PC-9 (cell line): ENCODE measurements at regions of chr2 and their contacts with region 1.

Region 1: GRCh38 chr2:60780721-60781120 is 24.7 kb downstream of the PAPOLG start:
- DNase-seq: no peak
- H3K4me3 ChIP-seq: no peak overlapping the region
- H3K27ac ChIP-seq: no peak overlapping the region
- H3K4me1 ChIP-seq: no peaks in the 10 kb centered on the region
- H3K27me3 ChIP-seq: no peaks in the 10 kb centered on the region
- CTCF ChIP-seq: no peak

Region 2: DNA sequence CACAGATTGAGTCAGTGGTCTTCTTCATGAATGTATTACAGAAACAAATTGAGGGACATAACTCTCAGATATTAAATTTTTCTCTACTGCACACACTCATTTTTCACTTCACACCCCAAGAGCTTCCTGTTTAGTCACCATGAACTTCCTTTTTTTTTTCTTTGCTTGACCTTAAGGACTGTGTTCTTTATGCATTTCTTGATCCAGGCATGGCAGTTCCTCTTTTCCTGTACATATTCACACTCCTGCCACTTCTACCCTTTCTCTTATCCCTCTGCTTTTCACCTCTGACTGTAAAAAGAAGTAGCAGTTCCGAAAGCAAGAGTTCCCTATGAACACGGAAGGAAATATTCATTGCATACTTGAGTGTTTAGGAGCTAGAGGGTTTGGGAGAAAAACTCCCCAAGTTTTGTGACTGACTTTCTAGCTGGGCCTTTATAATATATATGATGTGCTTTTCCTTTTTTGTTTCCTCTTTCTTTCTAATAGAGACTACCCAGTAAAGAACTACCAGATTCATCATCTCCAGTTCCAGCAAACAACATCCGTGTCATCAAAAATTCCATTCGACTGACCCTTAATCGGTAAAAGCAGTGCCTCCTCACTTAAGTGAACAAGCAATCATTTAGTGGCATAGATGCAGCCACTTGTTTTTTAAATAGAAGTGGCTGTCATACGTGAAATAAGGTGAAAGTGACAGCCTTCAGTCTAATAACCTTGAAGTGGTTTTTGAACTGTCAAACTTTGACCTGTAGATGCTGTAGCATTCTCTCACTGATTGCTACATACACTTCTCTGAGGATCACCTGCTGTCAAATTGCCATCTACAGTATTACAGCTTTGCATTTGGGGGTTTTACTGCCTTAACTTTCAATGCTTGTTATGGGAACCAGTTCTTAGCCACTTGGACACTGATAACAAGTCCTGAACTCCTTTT is 16.1 kb after region 1 on chr2:
- CTCF ChIA-PET with region 1: no interaction called
- POLR2A ChIA-PET with region 1: no interaction called
- intact Hi-C with region 1: no loop called
- DNase-seq: no peak
- H3K4me3 ChIP-seq: no peak overlapping the region
- H3K27ac ChIP-seq: no peak overlapping the region
- H3K4me1 ChIP-seq: no peaks in the 10 kb centered on the region
- H3K27me3 ChIP-seq: no peaks in the 10 kb centered on the region
- CTCF ChIP-seq: no peak

Region 3: DNA sequence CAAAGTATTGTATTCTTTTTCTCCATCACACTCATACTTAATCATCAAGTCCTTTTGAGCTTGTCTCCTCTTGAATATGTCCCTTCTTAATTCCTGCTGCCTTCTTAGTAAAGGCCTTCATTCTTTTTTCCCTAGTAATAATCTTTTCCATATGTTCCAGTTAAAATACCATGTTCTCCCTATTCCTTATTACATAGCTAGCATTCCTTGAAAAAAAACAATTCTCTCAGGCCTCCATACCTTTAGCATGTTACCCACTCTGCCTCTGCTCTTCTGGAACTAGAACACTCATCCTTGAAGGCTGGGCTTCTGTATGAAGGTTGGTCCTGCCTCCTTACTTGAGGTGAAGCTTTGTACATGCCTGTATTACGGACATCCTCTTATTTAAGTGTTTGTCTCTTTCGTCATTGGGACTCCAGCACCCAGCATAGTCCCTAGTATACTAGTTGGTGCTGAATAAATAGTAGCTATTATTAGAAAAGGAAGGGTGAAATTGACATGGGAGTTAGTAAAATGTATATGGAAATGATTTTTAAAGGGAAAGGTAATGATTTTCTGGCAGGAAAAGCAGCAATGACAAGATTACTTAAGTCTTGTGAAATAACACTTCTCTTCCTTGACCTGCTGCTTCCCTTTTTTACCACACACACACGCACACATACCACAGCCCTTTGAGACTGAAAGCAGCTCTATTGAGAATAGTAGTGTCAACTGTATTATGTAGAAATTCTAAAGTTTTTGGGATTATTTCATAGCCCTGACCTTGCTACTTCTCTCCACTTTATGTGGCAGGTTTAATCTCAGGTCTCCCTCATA is 146.2 kb after region 1 on chr2:
- CTCF ChIA-PET with region 1: no interaction called
- POLR2A ChIA-PET with region 1: no interaction called
- intact Hi-C with region 1: no loop called
- DNase-seq: no peak
- H3K4me3 ChIP-seq: no peak overlapping the region
- H3K27ac ChIP-seq: no peak overlapping the region
- H3K4me1 ChIP-seq: no peaks in the 10 kb centered on the region
- H3K27me3 ChIP-seq: no peaks in the 10 kb centered on the region
- CTCF ChIP-seq: no peak

Region 4: GRCh38 chr2:60977562-60977895 is 196.8 kb after region 1 on chr2:
- CTCF ChIA-PET with region 1: interaction called, 11 read pairs
- POLR2A ChIA-PET with region 1: no interaction called
- intact Hi-C with region 1: no loop called
- DNase-seq: no peak
- H3K4me3 ChIP-seq: no peak overlapping the region
- H3K27ac ChIP-seq: no peak overlapping the region
- H3K4me1 ChIP-seq: no peaks in the 10 kb centered on the region
- H3K27me3 ChIP-seq: no peaks in the 10 kb centered on the region
- CTCF ChIP-seq: no peak

Region 5: GRCh38 chr2:61044636-61045035 is 263.9 kb after region 1 on chr2:
- CTCF ChIA-PET with region 1: no interaction called
- POLR2A ChIA-PET with region 1: interaction called, 10 read pairs
- intact Hi-C with region 1: no loop called
- DNase-seq: no peak
- H3K4me3 ChIP-seq: no peak overlapping the region
- H3K27ac ChIP-seq: no peak overlapping the region
- H3K4me1 ChIP-seq: no peaks in the 10 kb centered on the region
- H3K27me3 ChIP-seq: no peaks in the 10 kb centered on the region
- CTCF ChIP-seq: no peak

Region 6: GRCh38 chr2:61470965-61471904 is 690.5 kb after region 1 on chr2 and contains the start of gene USP34:
- CTCF ChIA-PET with region 1: no interaction called
- POLR2A ChIA-PET with region 1: no interaction called
- intact Hi-C with region 1: no loop called
- DNase-seq: peak; percentile 81 to 90
- H3K4me3 ChIP-seq: peak within 1 kb of the TSS; percentile 79
- H3K27ac ChIP-seq: peak within 1 kb of the TSS; percentile 80
- H3K4me1 ChIP-seq: peaks cover 18% of the 10 kb centered on the region
- H3K27me3 ChIP-seq: no peaks in the 10 kb centered on the region
- CTCF ChIP-seq: no peak
- total RNA-seq, gene USP34: 85.4 and 120 TPM in 2 replicates